Activated CD8-positive, alpha-beta T cell treated with anti-CD3 and anti-CD28 coated beads for 36 hours (primary cell): ENCODE measurements at regions of chr6 and their contacts with region 1.

Region 1: DNA sequence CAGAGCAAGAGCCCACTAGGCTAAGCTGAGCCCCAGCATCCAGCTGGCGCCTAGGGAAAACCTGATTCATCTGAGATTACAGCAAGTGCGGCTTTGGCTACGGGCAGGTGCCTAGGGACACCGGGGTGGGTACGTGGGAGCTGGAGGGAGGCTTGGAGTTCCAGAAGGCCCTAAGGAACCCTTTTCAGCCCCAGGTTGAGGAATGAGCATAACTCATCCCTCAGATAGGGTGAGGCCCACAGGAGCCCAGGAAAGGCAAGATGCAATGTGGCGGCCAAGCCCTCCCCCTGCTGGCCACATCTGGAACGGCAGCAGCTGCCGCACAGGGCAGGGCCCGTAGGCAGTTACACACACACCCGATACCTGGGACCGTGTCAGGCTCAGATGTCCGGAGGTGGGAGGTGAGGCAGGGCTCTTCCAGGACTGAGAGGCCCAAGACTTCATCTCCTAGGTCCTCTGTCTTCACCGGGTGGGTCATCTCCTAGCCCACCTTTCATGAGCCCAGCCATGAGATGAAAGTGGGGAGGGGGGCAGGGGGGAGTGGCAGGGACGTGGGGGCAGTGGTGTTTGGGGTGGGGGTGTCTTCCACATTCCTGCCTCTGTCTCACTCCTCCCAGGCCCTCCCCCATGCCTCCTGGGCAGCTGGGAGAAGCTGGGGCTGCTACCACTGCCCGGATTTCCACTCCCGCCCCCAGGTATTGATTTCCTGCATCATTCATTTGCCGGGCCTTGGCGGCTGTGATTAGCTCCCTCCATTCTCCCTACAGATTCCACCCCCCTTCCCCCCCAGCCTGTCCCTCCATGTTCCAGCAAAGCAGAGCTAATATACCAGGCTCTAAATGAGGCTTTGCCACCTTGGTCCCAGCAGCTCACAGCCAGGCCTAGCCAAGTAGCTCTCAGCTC is 5.5 kb downstream of the MDGA1 start:
- DNase-seq: peak; percentile 83
- ATAC-seq: peak; percentile 87
- H3K4me3 Mint-ChIP-seq: no peak overlapping the region
- H3K27ac Mint-ChIP-seq: no peak overlapping the region
- H3K4me1 Mint-ChIP-seq: peaks cover 10% of the 10 kb centered on the region
- H3K27me3 Mint-ChIP-seq: peaks cover 32% of the 10 kb centered on the region
- CTCF ChIP-seq: peak; percentile 92

Region 2: DNA sequence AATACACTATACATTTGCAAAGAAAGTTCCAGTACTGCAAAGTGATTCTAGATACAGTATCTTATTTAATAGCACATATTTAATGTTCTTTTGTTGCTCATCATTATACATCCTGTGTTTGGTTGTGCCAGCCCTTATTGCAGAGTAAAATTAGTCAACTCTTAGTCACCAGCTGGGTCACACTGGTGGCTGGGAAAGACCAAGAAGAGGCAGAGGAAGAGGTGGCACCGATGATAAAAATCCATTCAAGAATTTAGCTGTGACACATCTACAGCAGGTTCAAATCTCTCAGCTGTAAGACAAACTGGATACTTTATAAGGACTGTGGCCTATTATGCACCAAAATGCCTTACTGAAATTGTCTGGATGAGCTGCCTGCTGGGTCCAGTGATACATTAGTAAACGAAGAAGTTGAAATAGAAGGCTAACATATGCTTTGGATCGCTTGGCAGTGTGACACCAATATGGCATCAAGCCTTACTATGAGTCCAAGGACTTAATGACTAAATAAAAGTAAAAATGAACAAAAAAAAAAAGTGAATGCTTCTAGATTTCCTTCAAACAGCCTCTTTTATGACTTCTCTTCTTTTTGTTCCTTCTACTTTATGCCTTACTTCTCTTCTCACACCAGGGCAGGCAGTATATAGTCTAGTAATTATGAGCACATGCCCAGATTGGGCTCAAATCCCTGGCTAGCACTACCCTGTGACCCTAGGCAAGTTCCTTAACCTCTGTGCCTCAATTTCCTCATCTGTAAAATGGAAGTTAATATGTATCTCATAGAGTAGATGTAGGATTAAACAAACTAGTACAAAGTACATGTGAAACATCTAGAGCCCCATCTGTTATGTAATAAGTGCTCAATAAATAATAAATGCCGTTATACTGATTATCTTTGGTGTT is 367.8 kb before region 1 on chr6:
- CTCF ChIA-PET with region 1: interaction called, 10 read pairs
- POLR2A ChIA-PET with region 1: no interaction called
- intact Hi-C with region 1: loop called (anchors 5 kb)
- DNase-seq: peak; percentile 48
- ATAC-seq: peak; percentile 79
- H3K4me3 Mint-ChIP-seq: no peak overlapping the region
- H3K27ac Mint-ChIP-seq: peak overlapping the region; percentile 26
- H3K4me1 Mint-ChIP-seq: peaks cover 13% of the 10 kb centered on the region
- H3K27me3 Mint-ChIP-seq: no peaks in the 10 kb centered on the region
- CTCF ChIP-seq: no peak

Region 3: GRCh38 chr6:37381579-37381978 is 310.6 kb before region 1 on chr6:
- CTCF ChIA-PET with region 1: interaction called, 16 read pairs
- POLR2A ChIA-PET with region 1: no interaction called
- intact Hi-C with region 1: no loop called
- DNase-seq: peak; percentile 36
- ATAC-seq: peak; percentile 64
- H3K4me3 Mint-ChIP-seq: no peak overlapping the region
- H3K27ac Mint-ChIP-seq: no peak overlapping the region
- H3K4me1 Mint-ChIP-seq: peaks cover 2% of the 10 kb centered on the region
- H3K27me3 Mint-ChIP-seq: no peaks in the 10 kb centered on the region
- CTCF ChIP-seq: peak; percentile 68

Region 4: DNA sequence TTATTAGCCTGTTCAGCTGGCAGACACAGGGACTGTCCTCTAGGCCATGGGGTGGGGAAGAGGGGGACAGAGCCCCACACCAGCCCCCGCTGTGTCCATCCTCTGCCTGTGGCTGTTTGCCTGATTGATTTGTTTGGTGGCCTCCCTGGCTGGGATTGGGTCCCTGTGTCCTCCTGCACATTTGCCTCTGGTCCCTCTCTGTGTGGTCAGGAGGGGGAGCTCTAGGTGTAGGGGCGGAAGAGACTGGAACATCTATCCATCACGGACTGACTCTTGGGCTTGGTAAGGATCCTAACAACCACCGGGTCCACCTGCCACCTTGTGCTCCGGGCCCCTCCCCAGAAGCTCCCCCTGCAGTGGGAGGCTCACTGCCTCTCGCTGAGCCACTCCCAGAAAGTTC is 154.0 kb before region 1 on chr6:
- CTCF ChIA-PET with region 1: no interaction called
- POLR2A ChIA-PET with region 1: no interaction called
- intact Hi-C with region 1: no loop called
- DNase-seq: no peak
- ATAC-seq: no peak
- H3K4me3 Mint-ChIP-seq: no peak overlapping the region
- H3K27ac Mint-ChIP-seq: no peak overlapping the region
- H3K4me1 Mint-ChIP-seq: peaks cover 35% of the 10 kb centered on the region
- H3K27me3 Mint-ChIP-seq: no peaks in the 10 kb centered on the region
- CTCF ChIP-seq: no peak

Region 5: DNA sequence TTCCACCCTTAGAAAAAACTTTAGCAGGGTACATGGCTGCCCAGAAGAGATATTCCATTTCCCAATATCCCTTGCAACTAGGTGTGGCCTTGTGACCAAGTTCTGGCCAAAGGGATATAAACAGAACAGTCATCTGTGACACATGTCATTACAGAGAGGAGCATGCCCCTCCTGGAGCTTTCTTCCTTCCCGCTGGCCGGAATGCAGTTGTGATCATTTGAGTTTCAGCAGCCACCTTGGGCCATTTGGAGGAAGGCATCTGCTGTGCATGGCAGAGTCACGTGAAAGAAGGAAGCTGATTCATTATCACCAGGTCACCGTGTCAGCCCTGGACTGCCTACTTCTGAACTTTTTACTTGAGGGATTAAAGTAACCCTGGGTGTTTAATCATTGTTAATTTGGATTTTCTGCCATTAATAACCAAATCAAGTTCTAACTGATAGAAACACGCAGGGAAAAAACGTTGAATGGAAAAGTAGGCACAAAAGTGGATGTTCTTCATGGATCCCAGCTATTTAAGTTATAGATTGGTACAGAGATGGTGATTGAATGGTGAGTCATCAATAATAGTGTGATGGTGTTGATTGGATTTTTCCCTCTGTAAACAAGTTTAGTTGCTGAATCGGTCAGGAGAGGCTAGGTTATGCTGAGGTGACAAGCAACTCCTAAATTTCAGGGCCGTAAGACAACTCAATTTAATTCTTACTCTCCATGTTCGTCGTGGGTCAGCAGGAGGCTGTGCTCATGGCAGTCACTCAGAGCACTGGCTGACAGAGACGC is 111.8 kb before region 1 on chr6:
- CTCF ChIA-PET with region 1: interaction called, 15 read pairs
- POLR2A ChIA-PET with region 1: no interaction called
- intact Hi-C with region 1: no loop called
- DNase-seq: no peak
- ATAC-seq: no peak
- H3K4me3 Mint-ChIP-seq: no peak overlapping the region
- H3K27ac Mint-ChIP-seq: no peak overlapping the region
- H3K4me1 Mint-ChIP-seq: no peaks in the 10 kb centered on the region
- H3K27me3 Mint-ChIP-seq: no peaks in the 10 kb centered on the region
- CTCF ChIP-seq: no peak

Region 6: DNA sequence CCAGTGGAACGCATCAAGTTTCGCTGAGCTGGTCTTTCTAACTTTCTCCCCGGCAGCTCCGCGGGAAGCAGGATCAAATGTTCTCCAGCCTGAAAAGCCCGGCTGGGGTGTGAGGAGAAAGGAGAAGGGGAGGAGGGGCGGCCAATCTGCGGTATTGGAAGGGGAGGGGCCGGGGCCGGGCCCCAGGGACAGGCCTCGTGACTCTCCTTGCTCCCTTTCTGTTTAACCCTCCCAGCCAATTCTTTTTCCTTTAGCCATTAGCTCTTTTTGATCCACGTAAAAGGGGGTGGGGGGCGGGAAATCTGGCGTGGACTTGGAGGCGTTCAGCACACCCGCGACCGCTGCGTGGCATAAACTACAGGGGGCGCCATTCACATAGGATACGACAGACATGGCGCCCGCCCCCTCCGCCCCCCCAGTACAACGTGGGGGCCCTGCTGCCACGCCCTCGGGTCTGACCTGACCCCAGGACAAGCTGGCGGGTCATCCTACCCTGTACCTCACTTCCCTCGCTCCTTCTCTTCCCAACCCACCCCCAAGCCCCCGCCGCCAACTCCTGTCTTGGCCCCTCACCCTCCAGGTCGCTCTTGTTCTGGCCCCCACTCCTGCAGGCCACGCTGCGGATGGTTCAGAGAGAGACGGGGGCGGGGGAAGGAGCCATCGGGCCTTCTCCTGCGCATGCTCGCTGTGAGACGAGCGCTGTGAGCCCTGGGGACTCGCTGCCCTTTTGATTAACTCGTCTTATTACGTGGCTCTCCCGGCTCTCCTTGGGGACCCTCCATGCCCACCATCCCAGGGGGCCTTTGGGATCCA is 13.3 kb after region 1 on chr6:
- CTCF ChIA-PET with region 1: interaction called, 16 read pairs
- POLR2A ChIA-PET with region 1: interaction called, 3 read pairs
- intact Hi-C with region 1: no loop called
- DNase-seq: peak; percentile 85
- ATAC-seq: peak; percentile 88
- H3K4me3 Mint-ChIP-seq: peak overlapping the region; percentile 62
- H3K27ac Mint-ChIP-seq: peak overlapping the region; percentile 78
- H3K4me1 Mint-ChIP-seq: peaks cover 8% of the 10 kb centered on the region
- H3K27me3 Mint-ChIP-seq: peaks cover 4% of the 10 kb centered on the region
- CTCF ChIP-seq: peak; percentile 86

Region 7: GRCh38 chr6:37713529-37714119 is 21.5 kb after region 1 on chr6:
- CTCF ChIA-PET with region 1: interaction called, 11 read pairs
- POLR2A ChIA-PET with region 1: interaction called, 5 read pairs
- intact Hi-C with region 1: no loop called
- DNase-seq: no peak
- ATAC-seq: no peak
- H3K4me3 Mint-ChIP-seq: no peak overlapping the region
- H3K27ac Mint-ChIP-seq: no peak overlapping the region
- H3K4me1 Mint-ChIP-seq: peaks cover 4% of the 10 kb centered on the region
- H3K27me3 Mint-ChIP-seq: peaks cover 5% of the 10 kb centered on the region
- CTCF ChIP-seq: no peak

Region 8: DNA sequence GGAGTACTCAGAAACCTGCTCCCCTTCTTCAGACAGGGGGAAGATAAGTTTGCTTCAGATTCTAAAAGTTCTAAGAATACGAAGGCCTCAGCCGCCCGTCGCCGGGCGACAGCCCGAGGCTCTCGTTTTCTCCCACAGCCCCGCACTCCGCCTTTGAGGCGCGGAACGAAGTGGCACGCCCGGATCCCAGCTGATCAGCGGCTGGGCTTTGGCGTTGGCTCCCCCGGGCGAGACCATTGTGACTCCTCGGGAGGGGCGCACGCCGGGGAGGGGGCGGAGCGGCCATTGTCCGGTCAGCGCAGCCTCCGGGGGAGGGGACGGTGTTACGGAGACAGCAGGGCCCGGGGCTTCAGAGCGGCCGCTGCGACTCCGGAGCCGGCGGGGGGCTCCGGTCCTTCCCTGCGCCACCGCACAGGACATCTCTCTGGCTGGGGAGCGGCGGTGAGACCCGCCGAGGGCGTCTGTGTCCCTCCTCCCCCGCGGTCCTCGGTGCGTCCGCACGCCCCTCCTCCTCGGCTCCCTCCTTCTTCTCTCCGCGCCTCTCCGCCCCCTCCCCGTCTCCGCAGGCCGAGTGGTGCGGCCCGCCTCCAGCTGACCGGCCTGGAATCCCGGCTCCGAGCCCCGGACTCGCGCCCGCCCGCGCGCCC is 127.1 kb after region 1 on chr6 and contains the start of gene ZFAND3:
- CTCF ChIA-PET with region 1: no interaction called
- POLR2A ChIA-PET with region 1: no interaction called
- intact Hi-C with region 1: no loop called
- DNase-seq: peak; percentile 95
- ATAC-seq: peak; percentile 83
- H3K4me3 Mint-ChIP-seq: peak within 1 kb of the TSS; percentile 97
- H3K27ac Mint-ChIP-seq: peak within 1 kb of the TSS; percentile 98
- H3K4me1 Mint-ChIP-seq: peaks cover 51% of the 10 kb centered on the region
- H3K27me3 Mint-ChIP-seq: no peaks in the 10 kb centered on the region
- CTCF ChIP-seq: no peak
- total RNA-seq, gene ZFAND3: 32.3 to 37.9 TPM